HEK293 (cell line): ENCODE measurements at regions of chr17 and their contacts with region 1.

Region 1: GRCh38 chr17:8189711-8190477 is at the start of gene BORCS6:
- H3K4me3 ChIP-seq: peak within 1 kb of the TSS; percentile 75
- H3K27ac ChIP-seq: peak within 1 kb of the TSS; percentile 75; the same call in 1 of the 2 replicates
- H3K4me1 ChIP-seq: peaks cover 13% of the 10 kb centered on the region
- CTCF ChIP-seq: peak; percentile 88

Region 2: DNA sequence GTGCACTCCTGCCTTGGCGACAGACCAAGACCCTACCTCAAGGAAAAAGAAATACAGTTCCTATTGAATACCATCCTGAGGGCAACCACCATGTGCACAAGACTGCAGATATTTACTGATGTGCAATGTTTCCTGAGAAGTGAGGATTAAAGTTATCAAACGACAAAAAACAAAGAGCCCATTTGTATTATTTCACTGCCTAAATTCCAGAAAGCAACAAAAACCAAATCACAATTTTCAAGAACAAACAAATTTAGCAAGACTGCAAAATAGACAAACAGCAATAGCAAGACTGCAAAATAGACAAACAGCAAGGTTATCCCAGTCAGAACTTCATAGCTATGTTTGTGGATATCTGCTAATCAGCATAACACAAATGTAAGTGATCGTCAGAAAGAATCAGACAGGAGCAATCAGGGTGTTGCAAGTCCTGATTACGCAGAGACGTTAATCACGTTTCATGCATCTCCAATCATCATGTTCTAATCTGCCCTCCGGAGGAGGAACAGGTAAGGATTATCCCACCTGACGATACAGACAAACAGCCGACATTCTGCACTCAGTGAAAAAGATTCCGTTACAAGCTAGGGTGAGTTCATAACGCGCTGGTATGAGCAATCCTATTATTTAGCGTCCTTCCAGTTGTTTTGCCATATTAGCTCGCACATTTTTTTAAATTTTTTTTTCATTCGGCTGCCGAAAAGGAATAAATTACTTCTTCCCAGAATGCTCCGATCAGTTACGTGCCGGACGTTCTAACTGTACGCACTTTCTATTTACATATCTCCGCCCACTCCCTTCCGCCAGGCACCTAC is 16.6 kb before region 1 on chr17:
- CTCF ChIA-PET with region 1: interaction called, 6 read pairs
- POLR2A ChIA-PET with region 1: interaction called, 68 read pairs
- H3K4me3 ChIP-seq: peak overlapping the region; percentile 53
- H3K27ac ChIP-seq: peak overlapping the region; percentile 89
- H3K4me1 ChIP-seq: peaks cover 10% of the 10 kb centered on the region
- CTCF ChIP-seq: no peak